Activated CD4-positive, alpha-beta memory T cell treated with anti-CD3 and anti-CD28 coated beads for 36 hours (primary cell): ENCODE measurements at regions of chr19 and their contacts with region 1.

Region 1: GRCh38 chr19:6110360-6110977 is at the start of gene RFX2:
- DNase-seq: peak; percentile 99
- H3K4me3 Mint-ChIP-seq: peak within 1 kb of the TSS; percentile 80
- H3K27ac Mint-ChIP-seq: peak within 1 kb of the TSS; percentile 74
- H3K4me1 Mint-ChIP-seq: peaks cover 19% of the 10 kb centered on the region
- H3K27me3 Mint-ChIP-seq: peaks cover 12% of the 10 kb centered on the region
- total RNA-seq, gene RFX2: 6.5 to 7.9 TPM

Region 2: GRCh38 chr19:6048808-6049405 is 61.6 kb before region 1 on chr19:
- CTCF ChIA-PET with region 1: interaction called, 5 read pairs
- POLR2A ChIA-PET with region 1: no interaction called
- intact Hi-C with region 1: loop called (anchors 5 kb)
- DNase-seq: peak; percentile 85
- H3K4me3 Mint-ChIP-seq: no peak overlapping the region
- H3K27ac Mint-ChIP-seq: no peak overlapping the region
- H3K4me1 Mint-ChIP-seq: peaks cover 5% of the 10 kb centered on the region
- H3K27me3 Mint-ChIP-seq: no peaks in the 10 kb centered on the region

Region 3: DNA sequence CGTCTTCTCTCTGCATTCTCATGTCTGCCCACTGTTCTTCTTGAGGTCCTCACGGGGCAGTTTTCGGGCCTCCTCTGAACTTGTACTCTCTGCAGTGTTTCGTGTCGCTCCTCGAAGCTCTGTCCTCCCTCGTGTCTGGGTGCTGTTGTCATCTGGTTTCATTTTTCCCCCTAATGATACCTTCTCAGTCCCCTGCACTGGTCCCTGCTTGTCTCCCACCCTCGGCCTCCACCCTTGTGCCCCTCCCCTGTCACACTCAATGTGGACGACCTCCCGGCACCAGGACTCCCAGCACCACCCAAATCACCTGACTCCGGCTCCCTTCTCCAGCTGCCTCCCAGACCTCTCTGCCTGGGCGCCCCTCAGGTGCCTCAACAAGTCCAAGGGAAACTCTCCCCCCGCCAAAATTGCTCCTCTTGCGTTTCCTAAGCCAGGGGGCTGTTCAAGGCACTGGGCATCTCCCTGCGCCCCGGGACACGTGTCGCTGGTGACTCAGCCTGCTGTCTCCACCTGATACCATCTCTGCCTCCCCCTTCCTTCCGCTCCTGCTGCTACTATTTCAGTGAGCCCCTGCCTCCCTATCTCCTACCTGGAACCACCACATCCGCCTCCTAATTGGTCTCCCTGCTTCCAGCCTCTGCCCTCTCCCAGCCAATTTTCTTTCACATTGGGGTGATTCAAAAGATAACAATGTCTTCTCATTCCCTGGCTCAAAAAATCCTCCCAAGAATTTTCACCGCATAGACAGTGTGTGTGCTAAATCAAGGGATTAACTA is 49.7 kb before region 1 on chr19:
- CTCF ChIA-PET with region 1: no interaction called
- POLR2A ChIA-PET with region 1: no interaction called
- intact Hi-C with region 1: loop called (anchors 2 kb)
- DNase-seq: peak; percentile 62
- H3K4me3 Mint-ChIP-seq: peak overlapping the region; percentile 35
- H3K27ac Mint-ChIP-seq: peak overlapping the region; percentile 31
- H3K4me1 Mint-ChIP-seq: peaks cover 39% of the 10 kb centered on the region
- H3K27me3 Mint-ChIP-seq: peaks cover 1% of the 10 kb centered on the region